ENCODE measurements at regions of chr6 and their contacts with region 1.

Region 1: DNA sequence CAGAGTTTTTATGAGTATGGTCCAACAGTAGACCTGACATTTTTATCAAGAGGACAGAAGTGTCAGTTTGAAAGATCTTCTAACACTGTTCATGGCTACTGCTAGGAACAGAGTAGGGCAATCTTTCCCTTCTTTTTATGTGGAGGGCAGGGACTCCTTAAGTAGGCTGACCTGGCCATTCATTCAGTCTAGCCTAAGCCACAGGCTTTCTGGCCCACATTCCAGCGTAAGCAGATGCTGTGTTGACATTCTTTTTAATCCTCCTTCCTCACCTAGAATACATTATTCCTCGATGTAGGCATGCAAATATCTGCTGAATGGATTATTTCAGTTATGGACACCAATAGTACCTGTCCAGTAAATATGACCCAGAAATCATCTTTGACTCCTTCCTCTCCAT is 188.3 kb downstream of the ATXN1 start:
- DNase-seq: no peak
- H3K4me3 Mint-ChIP-seq: no peak overlapping the region
- H3K27ac Mint-ChIP-seq: no peak overlapping the region
- H3K4me1 Mint-ChIP-seq: peaks cover 36% of the 10 kb centered on the region
- H3K27me3 Mint-ChIP-seq: no peaks in the 10 kb centered on the region

Region 2: GRCh38 chr6:16548121-16548520 is 24.8 kb before region 1 on chr6:
- CTCF ChIA-PET with region 1: no interaction called
- POLR2A ChIA-PET with region 1: no interaction called
- intact Hi-C with region 1: loop called (anchors 1 kb)
- DNase-seq: no peak
- H3K4me3 Mint-ChIP-seq: no peak overlapping the region
- H3K27ac Mint-ChIP-seq: no peak overlapping the region
- H3K4me1 Mint-ChIP-seq: peaks cover 16% of the 10 kb centered on the region
- H3K27me3 Mint-ChIP-seq: no peaks in the 10 kb centered on the region

Region 3: GRCh38 chr6:16639684-16640480 is 66.9 kb after region 1 on chr6:
- CTCF ChIA-PET with region 1: interaction called, 3 read pairs
- POLR2A ChIA-PET with region 1: no interaction called
- intact Hi-C with region 1: loop called (anchors 2 kb)
- DNase-seq: no peak
- H3K4me3 Mint-ChIP-seq: no peak overlapping the region
- H3K27ac Mint-ChIP-seq: no peak overlapping the region
- H3K4me1 Mint-ChIP-seq: peaks cover 46% of the 10 kb centered on the region
- H3K27me3 Mint-ChIP-seq: no peaks in the 10 kb centered on the region

Measured in activated CD4-positive, alpha-beta memory T cell treated with anti-CD3 and anti-CD28 coated beads for 36 hours (primary cell).